Head of caudate nucleus (tissue), 42 donors: ENCODE measurements at regions of chr17 and their contacts with region 1.

Region 1: DNA sequence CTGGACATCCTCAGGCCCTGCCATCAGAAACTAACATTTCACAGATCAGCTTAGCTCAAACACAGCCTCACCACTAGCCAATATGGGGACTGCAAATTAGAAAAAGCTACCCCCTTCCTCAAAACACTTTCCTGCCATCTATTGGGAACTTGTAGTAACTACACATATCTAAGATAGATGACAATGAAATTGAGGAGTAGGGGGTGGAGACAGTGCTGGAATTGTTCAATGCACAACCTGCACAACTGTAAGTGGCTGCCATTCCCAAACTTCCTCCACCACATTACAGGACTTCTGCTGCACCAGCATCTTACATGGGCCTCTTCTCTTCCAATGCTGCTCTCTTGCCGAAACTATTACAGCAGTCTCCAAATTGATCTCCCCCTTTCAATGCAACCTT is 21.9 kb downstream of the AIPL1 start:
- DNase-seq: peak in 2 of 42 donors; percentile 16 to 17

Region 2: DNA sequence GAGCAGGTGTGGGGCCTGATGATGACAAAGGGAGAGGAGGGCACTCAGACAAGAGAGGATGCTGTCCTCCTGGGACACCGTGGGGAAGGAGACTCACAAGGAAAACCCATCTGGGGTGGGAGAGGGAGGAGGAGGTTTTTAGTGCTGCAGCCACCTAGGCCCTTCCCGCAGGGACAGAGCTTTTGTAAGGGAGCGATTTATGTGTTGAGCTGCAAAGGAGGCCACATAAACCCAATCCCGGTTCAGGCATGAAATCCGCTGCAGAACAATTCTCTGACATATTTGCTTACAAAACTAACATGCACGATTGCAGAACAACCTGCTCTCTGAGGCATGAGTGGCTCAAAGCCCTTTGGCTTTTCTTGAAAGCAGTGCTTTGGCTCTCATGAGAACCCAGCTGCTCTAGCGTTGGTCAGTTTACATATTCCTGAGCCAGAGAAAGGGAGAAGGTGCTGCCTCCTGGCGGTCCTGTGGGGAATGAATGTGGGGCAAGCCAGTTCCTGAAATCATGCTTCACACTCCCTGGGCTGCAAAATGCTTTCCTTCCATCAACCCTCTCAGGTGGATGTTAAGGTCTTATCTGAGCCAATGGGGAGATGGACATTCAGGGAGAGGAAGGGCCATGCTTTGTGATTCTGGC is 706.4 kb before region 1 on chr17:
- intact Hi-C with region 1: loop called (anchors 10 kb)
- DNase-seq: peak; percentile 18 to 83 (median 64)